ENCODE measurements at regions of chr7 and their contacts with region 1.

Region 1: DNA sequence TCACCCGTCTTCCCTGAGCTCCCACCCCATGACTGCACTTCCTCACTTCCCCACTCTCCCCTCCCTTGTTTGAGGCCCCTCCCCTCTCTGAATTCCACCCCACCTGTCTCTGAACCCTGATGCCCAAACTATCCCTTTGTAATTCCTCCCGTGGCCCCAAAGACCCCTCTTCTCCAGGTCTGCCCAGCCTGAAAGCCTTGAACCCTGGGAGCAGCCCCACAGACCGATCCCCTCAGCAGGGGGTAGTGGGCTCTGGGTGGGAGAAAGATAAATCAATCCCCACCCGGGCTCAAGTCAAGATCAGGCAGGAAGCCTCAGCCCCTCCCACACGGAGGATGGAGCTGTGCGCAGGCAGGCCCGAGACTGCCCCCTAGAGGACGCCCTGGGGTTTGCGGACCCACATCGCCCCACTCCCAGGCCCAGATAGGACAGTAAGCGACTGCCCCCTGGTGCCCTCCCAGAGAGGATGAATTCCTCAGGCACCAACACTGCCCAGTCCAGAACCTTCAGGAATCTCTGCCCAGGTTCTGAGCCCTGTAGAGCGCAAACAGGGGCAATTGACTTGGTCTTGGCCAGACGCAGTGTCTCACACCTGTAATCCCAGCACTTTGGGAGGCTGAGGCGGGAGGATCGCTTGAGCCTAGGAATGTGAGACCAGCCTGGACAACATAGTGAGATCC is 11.7 kb downstream of the HSPB1 start:
- DNase-seq: peak; percentile 92
- CTCF ChIP-seq: peak; percentile 100

Region 2: GRCh38 chr7:76179686-76180085 is 134.5 kb before region 1 on chr7:
- CTCF ChIA-PET with region 1: interaction called, 136 read pairs
- POLR2A ChIA-PET with region 1: no interaction called
- DNase-seq: no peak
- CTCF ChIP-seq: no peak

Region 3: DNA sequence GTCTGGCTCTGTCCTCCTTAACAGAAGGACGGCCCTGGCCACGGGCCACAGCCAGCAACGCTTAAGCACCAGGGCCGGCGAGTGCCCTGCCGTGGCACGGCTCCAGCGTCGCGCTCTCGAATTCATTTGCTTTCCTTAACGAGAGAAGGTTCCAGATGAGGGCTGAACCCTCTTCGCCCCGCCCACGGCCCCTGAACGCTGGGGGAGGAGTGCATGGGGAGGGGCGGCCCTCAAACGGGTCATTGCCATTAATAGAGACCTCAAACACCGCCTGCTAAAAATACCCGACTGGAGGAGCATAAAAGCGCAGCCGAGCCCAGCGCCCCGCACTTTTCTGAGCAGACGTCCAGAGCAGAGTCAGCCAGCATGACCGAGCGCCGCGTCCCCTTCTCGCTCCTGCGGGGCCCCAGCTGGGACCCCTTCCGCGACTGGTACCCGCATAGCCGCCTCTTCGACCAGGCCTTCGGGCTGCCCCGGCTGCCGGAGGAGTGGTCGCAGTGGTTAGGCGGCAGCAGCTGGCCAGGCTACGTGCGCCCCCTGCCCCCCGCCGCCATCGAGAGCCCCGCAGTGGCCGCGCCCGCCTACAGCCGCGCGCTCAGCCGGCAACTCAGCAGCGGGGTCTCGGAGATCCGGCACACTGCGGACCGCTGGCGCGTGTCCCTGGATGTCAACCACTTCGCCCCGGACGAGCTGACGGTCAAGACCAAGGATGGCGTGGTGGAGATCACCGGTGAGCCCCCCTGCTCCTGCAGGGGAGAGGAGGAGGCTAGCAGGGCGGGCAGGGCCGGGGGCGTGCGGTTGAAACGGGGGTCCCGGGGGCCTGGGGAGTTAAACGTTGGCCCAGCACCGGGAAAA is 11.6 kb before region 1 on chr7 and contains the start of gene HSPB1:
- CTCF ChIA-PET with region 1: interaction called, 339 read pairs
- POLR2A ChIA-PET with region 1: interaction called, 12 read pairs
- DNase-seq: peak; percentile 91
- CTCF ChIP-seq: no peak

Region 4: DNA sequence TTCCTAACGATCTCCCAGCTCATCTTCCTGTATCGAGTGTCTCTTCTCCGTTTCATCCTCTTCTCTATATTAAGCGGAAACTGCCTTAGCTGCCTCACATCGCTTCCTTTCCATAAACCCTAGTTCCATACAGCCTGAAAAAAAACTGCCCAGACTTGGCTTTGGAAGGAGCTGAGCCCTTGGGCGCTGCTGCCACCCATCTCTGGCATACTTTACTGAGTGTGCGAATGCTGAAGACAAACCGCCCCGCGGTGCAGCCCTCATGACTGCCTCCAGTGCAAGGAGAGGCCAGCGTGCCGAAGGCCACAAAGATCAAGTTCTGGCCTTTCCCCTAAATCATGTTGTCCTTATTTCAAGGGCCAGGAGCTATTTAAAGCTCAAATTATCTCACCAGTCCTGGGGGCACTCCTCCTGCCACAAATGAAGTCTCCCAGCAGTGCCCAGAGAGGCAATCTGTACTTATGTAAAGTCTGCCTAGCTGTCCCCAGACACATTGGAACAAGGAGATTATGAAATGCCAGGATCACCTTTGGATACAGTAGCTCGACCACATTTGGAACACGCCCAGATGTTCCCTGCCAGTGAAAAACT is 19.4 kb after region 1 on chr7:
- CTCF ChIA-PET with region 1: interaction called, 19 read pairs
- POLR2A ChIA-PET with region 1: no interaction called
- DNase-seq: no peak
- CTCF ChIP-seq: no peak